PC-3 (cell line): ENCODE measurements at regions of chr1 and their contacts with region 1.

Region 1: GRCh38 chr1:168391759-168392681 is 111.3 kb downstream of the TBX19 start:
- DNase-seq: peak; percentile 86
- ATAC-seq: peak; percentile 66
- H3K4me3 ChIP-seq: peak overlapping the region; percentile 10; the same call in 1 of the 2 replicates
- H3K27ac ChIP-seq: peak overlapping the region; percentile 84
- H3K4me1 ChIP-seq: peaks cover 45% of the 10 kb centered on the region
- H3K27me3 ChIP-seq: no peaks in the 10 kb centered on the region
- CTCF ChIP-seq: no peak

Region 2: DNA sequence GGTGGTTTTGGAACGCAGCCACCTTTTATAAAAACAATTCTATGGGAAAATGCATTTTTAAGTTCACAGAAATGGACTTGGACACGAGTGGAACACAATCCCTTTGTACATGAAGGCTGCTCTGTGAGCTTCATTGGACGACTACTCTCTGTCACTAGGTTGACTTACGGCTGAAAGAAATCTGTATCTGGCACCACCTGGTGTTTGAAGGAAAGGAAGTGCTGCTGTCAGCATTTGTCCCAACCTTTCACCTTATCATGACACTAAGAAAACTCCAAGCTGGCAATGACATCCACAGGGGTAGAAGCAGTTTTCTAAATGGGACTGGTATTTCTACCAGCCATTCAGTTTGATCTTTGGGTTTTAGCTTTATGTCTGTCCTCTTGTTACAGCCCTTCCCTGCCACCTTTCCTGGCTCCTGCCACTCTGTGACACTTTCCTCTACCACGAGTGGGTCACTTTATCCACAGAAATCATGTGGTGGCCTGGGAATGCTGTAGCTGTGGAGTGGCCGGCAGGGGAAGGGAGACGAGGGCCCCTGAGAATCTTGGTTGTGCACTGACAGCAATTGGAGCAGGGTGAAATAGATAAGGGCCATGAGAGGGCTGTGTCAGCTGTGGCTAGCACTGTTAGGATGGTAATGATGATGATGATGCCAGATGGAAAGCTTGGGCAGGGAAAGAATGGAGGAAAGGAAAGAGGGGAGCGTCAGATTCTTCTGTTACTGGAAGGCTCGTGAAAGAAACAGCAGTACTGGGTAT is 26.1 kb before region 1 on chr1:
- CTCF ChIA-PET with region 1: no interaction called
- POLR2A ChIA-PET with region 1: no interaction called
- intact Hi-C with region 1: loop called (anchors 2 kb)
- DNase-seq: peak; percentile 30
- ATAC-seq: peak; percentile 28; the same call in 1 of the 2 replicates
- H3K4me3 ChIP-seq: no peak overlapping the region
- H3K27ac ChIP-seq: no peak overlapping the region
- H3K4me1 ChIP-seq: peaks cover 16% of the 10 kb centered on the region
- H3K27me3 ChIP-seq: no peaks in the 10 kb centered on the region
- CTCF ChIP-seq: peak; percentile 49

Region 3: DNA sequence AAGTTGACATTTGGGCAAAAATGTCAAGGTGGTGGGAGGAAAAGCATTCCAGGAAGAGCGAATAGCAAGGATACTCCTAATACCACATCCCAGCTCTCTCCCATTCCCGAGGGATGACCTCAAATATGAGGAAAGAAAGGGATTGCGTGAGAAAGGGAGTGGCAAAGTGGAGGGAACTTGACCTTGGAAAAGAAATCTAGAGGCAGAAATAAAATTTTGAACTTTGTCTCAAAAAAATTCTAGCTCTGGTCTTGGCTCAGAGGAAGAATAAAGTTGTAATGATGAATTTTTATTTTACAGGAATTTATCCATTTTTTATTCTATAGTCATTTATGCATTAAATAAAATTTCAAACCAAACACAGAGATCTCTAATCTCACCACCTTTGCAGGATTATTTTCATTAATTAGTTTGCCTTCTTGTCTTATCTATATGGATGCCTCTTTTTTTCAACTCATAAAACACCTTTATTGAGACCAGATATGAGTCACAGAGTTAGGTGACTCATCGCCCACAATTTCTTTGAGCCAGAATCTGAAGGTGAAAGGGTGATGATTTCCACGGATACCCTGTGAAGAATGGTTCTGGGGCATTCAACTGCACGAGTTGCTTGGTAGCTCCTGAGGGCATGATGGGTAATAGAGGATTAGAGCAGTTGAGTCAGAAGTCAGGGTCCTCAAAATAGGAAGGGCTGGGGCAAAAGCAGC is 16.7 kb after region 1 on chr1:
- CTCF ChIA-PET with region 1: no interaction called
- POLR2A ChIA-PET with region 1: no interaction called
- intact Hi-C with region 1: loop called (anchors 2 kb)
- DNase-seq: peak; percentile 95
- ATAC-seq: peak; percentile 85
- H3K4me3 ChIP-seq: no peak overlapping the region
- H3K27ac ChIP-seq: peak overlapping the region; percentile 55
- H3K4me1 ChIP-seq: peaks cover 23% of the 10 kb centered on the region
- H3K27me3 ChIP-seq: no peaks in the 10 kb centered on the region
- CTCF ChIP-seq: no peak